IMR-90 (cell line): ENCODE measurements at regions of chr2 and their contacts with region 1.

Region 1: DNA sequence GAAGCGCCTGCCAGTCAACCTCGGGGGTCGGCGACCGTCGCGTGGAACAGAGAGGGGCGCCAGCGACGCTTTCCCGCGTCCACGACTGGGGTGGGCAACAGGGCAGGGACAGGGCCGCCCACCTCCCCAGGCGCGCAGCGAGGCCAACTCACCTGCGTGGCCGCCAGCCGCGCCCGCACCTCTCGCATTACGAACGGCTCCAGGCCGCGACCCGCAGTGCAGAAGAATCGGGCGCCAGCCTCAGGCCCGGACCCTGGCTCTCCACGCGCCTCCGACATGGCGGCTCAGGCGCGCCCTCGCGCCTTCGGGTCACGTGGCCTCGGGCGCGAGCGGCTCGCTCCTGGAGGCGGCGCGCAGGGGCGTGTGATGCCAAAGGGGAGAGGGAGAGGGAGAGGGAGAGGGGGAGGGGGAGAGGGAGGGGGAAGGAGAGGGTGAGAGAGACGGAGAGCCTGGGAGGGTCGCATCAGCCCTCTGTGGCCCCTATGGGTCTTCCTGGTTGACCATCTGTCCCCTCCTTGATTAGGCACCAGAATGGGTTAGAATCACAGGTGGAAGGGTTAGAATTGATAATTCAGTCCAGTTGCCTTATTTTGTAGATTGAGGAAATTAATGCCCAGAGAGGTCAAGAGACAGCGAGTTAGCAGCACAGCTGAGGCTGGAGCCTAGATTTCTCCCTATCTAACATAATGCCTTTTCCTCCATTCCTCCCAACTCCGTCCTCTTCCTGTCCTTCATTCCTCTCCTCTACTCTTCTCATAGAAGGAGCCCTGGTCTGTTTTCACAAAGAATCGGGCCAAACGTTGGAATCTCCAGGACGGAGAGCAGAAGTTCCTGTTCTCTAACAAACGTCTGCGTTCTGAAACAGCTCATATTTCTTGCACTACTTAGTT is at the start of gene THUMPD2:
- DNase-seq: peak; percentile 62
- ATAC-seq: peak; percentile 79
- H3K4me3 ChIP-seq: peak within 1 kb of the TSS; percentile 100
- H3K27ac ChIP-seq: peak within 1 kb of the TSS; percentile 88
- H3K4me1 ChIP-seq: peaks cover 9% of the 10 kb centered on the region
- H3K27me3 ChIP-seq: no peaks in the 10 kb centered on the region
- CTCF ChIP-seq: no peak
- POLR2A ChIP-seq: peak; percentile 73
- RAD21 ChIP-seq: no peak
- total RNA-seq, gene THUMPD2: 4.8 and 5.6 TPM in 2 replicates

Region 2: GRCh38 chr2:39603436-39603835 is 175.8 kb before region 1 on chr2:
- CTCF ChIA-PET with region 1: no interaction called
- POLR2A ChIA-PET with region 1: no interaction called
- dilution Hi-C with region 1: no loop called
- in situ Hi-C with region 1: no loop called
- intact Hi-C with region 1: no loop called
- DNase-seq: peak; percentile 33
- ATAC-seq: no peak
- H3K4me3 ChIP-seq: no peak overlapping the region
- H3K27ac ChIP-seq: no peak overlapping the region
- H3K4me1 ChIP-seq: no peaks in the 10 kb centered on the region; the same call in 1 of the 2 replicates
- H3K27me3 ChIP-seq: peaks cover 4% of the 10 kb centered on the region; the same call in 1 of the 2 replicates
- CTCF ChIP-seq: no peak
- POLR2A ChIP-seq: no peak
- RAD21 ChIP-seq: no peak

Region 3: GRCh38 chr2:39645826-39646225 is 133.4 kb before region 1 on chr2:
- CTCF ChIA-PET with region 1: interaction called, 13 read pairs
- POLR2A ChIA-PET with region 1: no interaction called
- dilution Hi-C with region 1: no loop called
- in situ Hi-C with region 1: no loop called
- intact Hi-C with region 1: no loop called
- DNase-seq: no peak
- ATAC-seq: no peak
- H3K4me3 ChIP-seq: no peak overlapping the region
- H3K27ac ChIP-seq: no peak overlapping the region
- H3K4me1 ChIP-seq: peaks cover 2% of the 10 kb centered on the region
- H3K27me3 ChIP-seq: no peaks in the 10 kb centered on the region
- CTCF ChIP-seq: no peak
- POLR2A ChIP-seq: no peak
- RAD21 ChIP-seq: no peak

Region 4: GRCh38 chr2:39696838-39697237 is 82.4 kb before region 1 on chr2:
- CTCF ChIA-PET with region 1: no interaction called
- POLR2A ChIA-PET with region 1: no interaction called
- dilution Hi-C with region 1: no loop called
- in situ Hi-C with region 1: no loop called
- intact Hi-C with region 1: no loop called
- DNase-seq: peak; percentile 87
- ATAC-seq: peak; percentile 68
- H3K4me3 ChIP-seq: no peak overlapping the region
- H3K27ac ChIP-seq: no peak overlapping the region
- H3K4me1 ChIP-seq: peaks cover 10% of the 10 kb centered on the region
- H3K27me3 ChIP-seq: no peaks in the 10 kb centered on the region
- CTCF ChIP-seq: peak; percentile 60
- POLR2A ChIP-seq: no peak
- RAD21 ChIP-seq: peak; percentile 69

Region 5: DNA sequence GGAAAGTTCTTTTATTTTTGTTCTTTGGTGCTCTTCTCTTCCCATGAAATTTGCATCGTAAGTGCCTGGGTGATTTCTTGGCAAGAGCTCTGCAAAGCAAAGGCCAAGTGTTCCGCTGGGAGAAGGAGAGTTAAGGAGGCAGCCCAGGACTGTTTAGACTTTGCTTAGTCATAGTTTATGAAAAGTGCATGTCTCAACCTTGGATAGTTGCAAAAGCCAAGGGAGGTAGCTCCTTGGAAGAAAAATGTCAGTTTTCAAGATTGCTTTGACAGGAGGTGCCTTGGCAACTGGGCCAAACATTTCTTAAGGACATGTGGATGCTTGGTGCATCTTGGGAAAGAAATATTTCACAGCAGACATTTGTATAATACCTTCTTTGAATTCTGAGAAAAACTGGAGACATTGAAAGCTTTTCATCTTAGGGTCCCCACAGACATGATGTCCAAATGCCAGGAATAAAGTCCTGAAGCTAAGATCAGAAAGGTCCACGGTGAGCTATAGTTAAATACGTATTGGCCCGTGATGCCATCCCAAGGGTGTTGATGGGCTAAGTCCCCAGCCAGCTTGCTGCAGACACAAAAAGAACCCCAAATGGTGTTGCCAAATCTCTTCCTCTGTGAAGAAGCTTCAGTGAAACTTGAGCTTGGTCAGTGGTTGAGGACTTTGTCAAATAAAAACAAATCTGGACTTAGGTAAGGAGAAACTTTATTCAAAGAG is 96.1 kb after region 1 on chr2:
- CTCF ChIA-PET with region 1: no interaction called
- POLR2A ChIA-PET with region 1: no interaction called
- dilution Hi-C with region 1: no loop called
- in situ Hi-C with region 1: no loop called
- intact Hi-C with region 1: no loop called
- DNase-seq: peak; percentile 97
- ATAC-seq: peak; percentile 96
- H3K4me3 ChIP-seq: no peak overlapping the region
- H3K27ac ChIP-seq: peak overlapping the region; percentile 40; the same call in 1 of the 2 replicates
- H3K4me1 ChIP-seq: peaks cover 9% of the 10 kb centered on the region
- H3K27me3 ChIP-seq: no peaks in the 10 kb centered on the region
- CTCF ChIP-seq: no peak
- POLR2A ChIP-seq: no peak
- RAD21 ChIP-seq: no peak

Region 6: DNA sequence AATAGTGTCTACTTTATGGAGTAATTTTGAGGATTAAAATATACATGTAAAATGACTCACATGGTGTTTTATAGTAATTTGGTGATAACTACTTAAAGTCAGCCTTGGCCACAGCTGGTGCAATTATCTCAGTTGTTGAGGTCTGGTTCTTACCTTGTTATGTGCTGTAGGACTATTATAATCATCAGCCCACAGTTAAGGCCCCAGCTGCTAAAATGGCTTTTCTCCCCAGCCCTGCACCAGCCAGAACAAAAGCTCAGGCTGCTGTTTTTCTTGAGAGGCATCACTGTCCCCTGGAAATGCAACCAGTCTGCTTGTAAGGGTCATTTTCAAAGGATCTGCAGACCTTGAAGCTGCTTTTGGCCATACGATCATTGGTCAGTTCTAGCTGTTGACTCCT is 283.2 kb after region 1 on chr2:
- CTCF ChIA-PET with region 1: no interaction called
- POLR2A ChIA-PET with region 1: no interaction called
- dilution Hi-C with region 1: no loop called
- in situ Hi-C with region 1: no loop called
- intact Hi-C with region 1: loop called (anchors 10 kb)
- DNase-seq: no peak
- ATAC-seq: no peak
- H3K4me3 ChIP-seq: no peak overlapping the region
- H3K27ac ChIP-seq: no peak overlapping the region
- H3K4me1 ChIP-seq: no peaks in the 10 kb centered on the region; the same call in 1 of the 2 replicates
- H3K27me3 ChIP-seq: no peaks in the 10 kb centered on the region
- CTCF ChIP-seq: no peak
- POLR2A ChIP-seq: no peak
- RAD21 ChIP-seq: no peak